ENCODE measurements at regions of chr17 and their contacts with region 1.

Region 1: DNA sequence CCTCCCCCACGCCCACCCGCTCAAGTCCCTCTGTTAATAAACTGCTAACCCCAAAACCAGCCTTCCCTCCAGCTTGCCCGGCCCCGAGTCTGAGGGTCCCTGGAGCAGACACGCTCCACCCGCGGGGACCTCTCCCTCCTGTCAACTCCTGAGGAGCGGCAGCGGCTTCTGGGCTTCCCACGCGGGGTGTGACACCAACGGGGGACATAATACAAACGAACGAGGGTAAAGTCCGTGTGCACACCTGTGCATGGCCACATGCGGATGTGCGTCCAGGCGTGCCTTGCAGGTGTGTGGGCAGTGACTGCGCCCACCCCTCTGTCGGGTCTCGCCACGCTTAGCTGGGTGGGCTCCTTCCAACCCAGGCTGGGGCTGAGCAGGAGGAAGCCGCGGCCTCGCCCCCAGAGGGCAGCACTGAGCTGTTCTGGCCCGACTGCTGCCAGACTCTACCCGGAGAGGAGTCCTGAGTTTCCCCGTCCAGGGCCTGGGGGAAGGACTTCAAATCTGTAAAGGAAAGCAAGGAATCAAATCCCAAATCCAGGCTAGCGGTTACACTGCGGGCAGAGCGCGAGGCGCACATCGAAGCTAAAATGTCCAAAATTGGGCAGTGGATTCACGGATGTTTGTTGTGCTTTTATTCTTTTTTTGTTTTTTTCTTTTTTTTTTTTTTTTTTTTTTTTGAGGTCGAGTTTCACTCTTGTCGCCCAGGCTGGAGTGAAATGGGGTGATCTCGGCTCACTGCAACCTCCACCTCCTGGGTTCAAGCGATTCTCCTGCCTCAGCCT is 24.2 kb upstream of the KRT17 start:
- H3K4me3 ChIP-seq: peak overlapping the region; percentile 42
- H3K27ac ChIP-seq: no peak overlapping the region; the same call in 1 of the 2 replicates
- H3K4me1 ChIP-seq: no peaks in the 10 kb centered on the region
- CTCF ChIP-seq: peak; percentile 93

Region 2: DNA sequence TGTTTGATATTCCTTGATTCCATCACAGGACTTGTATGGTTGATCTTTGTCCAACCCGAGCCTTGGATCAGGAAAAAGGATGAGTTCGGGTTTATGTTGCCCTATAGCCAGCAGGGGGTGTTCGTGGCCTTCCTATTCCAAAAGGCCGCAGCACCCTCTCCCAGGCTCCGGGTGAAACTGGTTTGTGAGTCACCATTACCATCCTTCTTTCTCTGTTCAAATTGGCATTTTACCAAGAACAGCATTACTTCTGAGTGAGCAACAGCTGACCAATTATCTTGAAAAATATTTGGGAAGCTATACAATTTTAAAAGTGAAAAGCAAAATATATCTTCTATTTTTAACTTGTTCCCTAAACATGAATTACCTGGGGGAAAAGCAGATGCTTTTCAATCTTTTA is 739.3 kb before region 1 on chr17:
- CTCF ChIA-PET with region 1: interaction called, 28 read pairs
- POLR2A ChIA-PET with region 1: no interaction called
- H3K4me3 ChIP-seq: no peak overlapping the region
- H3K27ac ChIP-seq: no peak overlapping the region
- H3K4me1 ChIP-seq: peaks cover 6% of the 10 kb centered on the region; the same call in 1 of the 2 replicates
- CTCF ChIP-seq: peak; percentile 45; the same call in 1 of the 2 replicates

Region 3: DNA sequence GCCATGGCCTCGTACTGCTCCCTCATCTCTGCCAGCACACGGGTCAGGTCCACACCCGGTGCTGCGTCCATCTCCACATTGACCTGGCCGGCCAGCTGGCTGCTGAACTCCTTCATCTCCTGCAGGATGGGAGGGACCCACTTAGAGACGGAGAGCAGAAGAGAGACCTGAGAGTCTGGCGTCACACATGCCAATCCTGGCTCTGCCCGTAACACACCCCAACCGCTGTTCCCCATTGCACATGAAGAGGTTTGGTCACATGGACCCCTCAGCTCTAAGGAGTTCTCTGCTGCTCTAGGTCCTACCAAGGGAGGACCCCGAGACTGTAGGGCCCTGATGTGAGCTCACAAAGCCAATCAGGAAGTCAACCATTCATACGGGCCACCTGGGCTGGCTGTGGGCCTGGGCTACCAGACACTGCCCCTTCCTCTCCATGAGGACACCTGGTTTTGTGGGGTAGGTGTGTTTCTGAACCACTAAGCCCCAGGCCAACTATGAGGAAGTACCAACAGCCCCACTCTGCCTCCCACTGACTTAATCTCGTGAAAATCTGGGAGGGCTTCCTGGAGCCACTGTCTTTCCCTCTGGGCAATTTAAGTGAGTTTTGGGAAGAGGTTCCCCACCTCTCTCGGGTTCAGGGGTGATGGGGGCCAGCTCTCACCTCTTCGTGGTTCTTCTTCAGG is 132.3 kb before region 1 on chr17:
- CTCF ChIA-PET with region 1: interaction called, 10 read pairs
- POLR2A ChIA-PET with region 1: no interaction called
- H3K4me3 ChIP-seq: no peak overlapping the region
- H3K27ac ChIP-seq: peak overlapping the region; percentile 17; the same call in 1 of the 2 replicates
- H3K4me1 ChIP-seq: peaks cover 44% of the 10 kb centered on the region
- CTCF ChIP-seq: no peak

Region 4: DNA sequence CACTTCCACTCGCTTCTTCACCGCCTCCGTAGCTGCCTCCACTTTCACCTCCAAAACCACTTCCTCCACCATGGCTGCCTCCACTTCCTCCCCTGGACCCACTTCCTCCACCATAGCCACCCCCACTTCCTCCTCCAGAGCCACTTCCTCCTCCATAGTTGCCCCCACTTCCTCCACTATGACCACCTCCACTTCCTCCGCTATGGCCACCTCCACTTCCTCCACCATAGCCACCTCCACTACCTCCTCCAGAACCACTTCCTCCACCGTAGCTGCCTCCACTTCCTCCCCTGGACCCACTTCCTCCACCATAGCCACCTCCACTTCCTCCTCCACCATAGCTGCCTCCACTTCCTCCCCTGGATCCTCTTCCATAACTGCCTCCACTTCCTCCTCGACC is 81.3 kb before region 1 on chr17:
- CTCF ChIA-PET with region 1: interaction called, 21 read pairs
- POLR2A ChIA-PET with region 1: no interaction called
- H3K4me3 ChIP-seq: no peak overlapping the region
- H3K27ac ChIP-seq: no peak overlapping the region
- H3K4me1 ChIP-seq: no peaks in the 10 kb centered on the region
- CTCF ChIP-seq: no peak

Region 5: DNA sequence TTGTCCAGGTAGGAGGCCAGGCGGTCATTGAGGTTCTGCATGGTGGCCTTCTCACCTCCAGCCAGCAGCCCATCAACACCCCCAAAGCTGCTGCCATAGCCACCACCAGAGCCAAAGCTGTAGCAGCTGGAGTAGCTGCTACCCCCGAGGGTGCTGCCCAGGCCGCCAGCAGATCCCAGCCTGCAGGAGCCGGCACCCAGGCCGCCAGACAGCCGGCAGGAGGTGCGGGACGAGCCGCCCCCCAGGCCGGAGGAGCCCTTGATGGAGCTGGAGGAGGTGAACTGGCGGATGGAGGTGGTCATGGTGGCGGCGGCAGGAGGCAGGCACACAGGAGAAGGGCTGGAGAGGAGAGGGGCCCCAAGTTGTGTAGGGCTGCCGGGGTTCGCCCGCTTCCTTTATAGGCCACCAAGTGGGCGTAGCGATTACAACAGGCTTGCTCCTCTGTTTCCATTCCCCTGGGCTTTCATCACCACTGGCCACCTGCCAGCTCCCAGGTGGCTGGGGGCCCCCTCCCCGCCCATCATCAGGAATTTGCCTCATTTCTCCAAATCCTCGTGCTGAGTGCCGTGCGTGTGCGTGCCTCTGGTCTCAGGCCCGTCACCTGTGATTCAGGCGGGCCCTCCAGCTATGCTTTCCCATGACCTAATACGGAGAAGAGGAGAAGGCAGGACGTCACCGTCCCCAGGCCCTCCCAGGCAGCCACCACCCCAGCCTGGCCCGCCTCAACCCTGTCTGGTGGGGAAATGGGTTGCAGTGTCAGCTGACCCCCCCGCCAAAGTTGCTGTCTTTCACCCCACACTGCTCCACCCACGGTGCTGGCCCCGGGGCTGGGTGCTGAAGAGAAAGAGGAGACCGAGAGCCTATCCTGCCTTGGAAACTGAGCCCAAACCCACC is 24.1 kb before region 1 on chr17 and contains the start of gene KRT17:
- CTCF ChIA-PET with region 1: interaction called, 17 read pairs
- POLR2A ChIA-PET with region 1: no interaction called
- H3K4me3 ChIP-seq: peak within 1 kb of the TSS; percentile 26
- H3K27ac ChIP-seq: no peak within 1 kb of the TSS
- H3K4me1 ChIP-seq: peaks cover 2% of the 10 kb centered on the region; the same call in 1 of the 2 replicates
- CTCF ChIP-seq: no peak

Region 6: GRCh38 chr17:41733348-41734138 is 84.9 kb after region 1 on chr17:
- CTCF ChIA-PET with region 1: no interaction called
- POLR2A ChIA-PET with region 1: no interaction called
- H3K4me3 ChIP-seq: peak overlapping the region; percentile 64
- H3K27ac ChIP-seq: no peak overlapping the region
- H3K4me1 ChIP-seq: peaks cover 2% of the 10 kb centered on the region; the same call in 1 of the 2 replicates
- CTCF ChIP-seq: no peak